Activated naive CD4-positive, alpha-beta T cell treated with anti-CD3 and anti-CD28 coated beads for 36 hours (primary cell): ENCODE measurements at regions of chr14 and their contacts with region 1.

Region 1: GRCh38 chr14:86462193-86462753 is 932.3 kb downstream of the FLRT2 start:
- DNase-seq: peak; percentile 5
- H3K4me3 Mint-ChIP-seq: no peak overlapping the region
- H3K27ac Mint-ChIP-seq: no peak overlapping the region
- H3K4me1 Mint-ChIP-seq: no peaks in the 10 kb centered on the region
- H3K27me3 Mint-ChIP-seq: no peaks in the 10 kb centered on the region

Region 2: DNA sequence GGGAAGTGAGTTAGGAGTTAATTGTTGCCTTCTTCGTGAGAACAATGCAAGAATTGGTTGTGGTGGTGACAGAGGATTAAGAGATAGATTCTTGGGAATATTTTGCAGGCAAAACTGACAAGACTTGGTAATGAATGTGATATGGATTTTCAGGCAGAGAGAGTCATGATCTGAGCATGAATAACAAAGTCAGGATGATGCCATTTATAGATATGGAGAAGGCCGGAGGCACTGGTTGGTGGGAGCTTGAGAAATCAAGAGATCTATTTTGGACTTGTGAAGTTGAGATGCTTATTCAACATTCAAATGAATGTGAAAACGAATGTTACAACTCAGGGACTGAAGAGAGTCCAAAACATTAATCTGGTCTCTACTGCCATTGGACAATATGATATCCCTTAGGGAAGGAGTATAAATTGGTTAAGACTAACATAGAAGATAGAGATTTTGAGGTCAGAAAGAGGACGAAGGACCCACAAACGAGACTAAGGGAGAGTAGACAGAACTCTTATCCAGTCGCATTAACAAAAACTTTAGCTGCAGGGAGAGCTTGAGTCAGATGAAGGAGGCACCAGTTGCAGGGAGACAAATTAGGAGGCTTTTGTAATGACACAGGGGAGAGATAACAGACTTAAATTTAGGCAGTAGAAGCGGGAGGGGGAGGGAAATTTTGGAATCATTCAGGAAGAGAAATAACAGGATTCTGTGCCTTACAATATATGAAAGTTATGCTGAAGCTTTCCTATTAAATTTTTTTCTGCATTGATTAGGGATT is 440.1 kb after region 1 on chr14:
- CTCF ChIA-PET with region 1: no interaction called
- intact Hi-C with region 1: loop called (anchors 5 kb)
- DNase-seq: no peak
- H3K4me3 Mint-ChIP-seq: no peak overlapping the region
- H3K27ac Mint-ChIP-seq: no peak overlapping the region
- H3K4me1 Mint-ChIP-seq: no peaks in the 10 kb centered on the region
- H3K27me3 Mint-ChIP-seq: no peaks in the 10 kb centered on the region